Caco-2 (cell line): ENCODE measurements at regions of chr22 and their contacts with region 1.

Region 1: GRCh38 chr22:19879695-19880506 is 25.2 kb upstream of the GNB1L start:
- DNase-seq: peak in 1 of 2 experiments; percentile 31
- H3K4me3 ChIP-seq: no peak overlapping the region
- H3K4me3 Mint-ChIP-seq: peak overlapping the region; percentile 72
- H3K27ac Mint-ChIP-seq: peak overlapping the region; percentile 100
- H3K4me1 ChIP-seq: peaks cover 38% of the 10 kb centered on the region
- H3K4me1 Mint-ChIP-seq: peaks cover 13% of the 10 kb centered on the region
- H3K27me3 ChIP-seq: no peaks in the 10 kb centered on the region
- H3K27me3 Mint-ChIP-seq: no peaks in the 10 kb centered on the region
- CTCF ChIP-seq: no peak

Region 2: DNA sequence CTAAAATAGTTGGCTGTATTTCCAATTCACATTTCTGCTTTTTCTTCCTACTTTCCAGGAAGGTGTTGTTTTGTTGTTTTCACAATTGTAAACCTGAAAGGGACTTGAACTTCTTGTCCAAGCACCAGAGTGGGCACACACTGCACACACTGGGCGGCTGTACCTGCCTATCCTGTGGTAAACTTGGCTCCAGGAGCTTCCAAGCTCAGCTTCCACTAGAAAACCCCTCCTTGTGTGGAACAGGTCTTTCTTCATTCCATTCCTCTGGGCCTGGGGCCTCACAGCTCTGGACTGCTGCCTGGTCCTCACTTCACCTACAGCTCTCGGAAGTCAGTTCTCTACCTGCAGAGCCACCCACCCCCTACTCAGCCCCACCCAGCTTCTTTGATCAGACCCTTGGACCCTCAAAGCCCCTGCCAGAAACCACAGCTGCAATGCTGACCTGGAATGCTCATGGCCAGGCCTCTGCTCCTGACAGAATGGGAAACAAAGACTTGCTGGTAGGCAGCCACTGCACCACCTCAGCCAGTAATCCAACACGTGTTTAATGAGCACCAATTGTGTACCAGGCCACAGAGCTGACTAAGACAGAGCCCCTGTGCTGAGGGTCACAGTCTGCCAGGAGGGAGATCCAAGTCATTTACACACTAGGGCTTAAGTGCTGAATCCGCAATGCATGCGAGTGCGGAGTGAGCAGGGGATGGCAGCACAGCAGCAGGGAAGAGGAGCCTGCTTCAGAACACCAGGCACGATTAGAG is 30.0 kb before region 1 on chr22:
- CTCF ChIA-PET with region 1: interaction called, 3 read pairs
- POLR2A ChIA-PET with region 1: interaction called, 5 read pairs
- intact Hi-C with region 1: loop called (anchors 1 kb)
- DNase-seq: peak; percentile 85 to 88
- H3K4me3 ChIP-seq: no peak overlapping the region
- H3K4me3 Mint-ChIP-seq: peak overlapping the region; percentile 69
- H3K27ac Mint-ChIP-seq: peak overlapping the region; percentile 98
- H3K4me1 ChIP-seq: peaks cover 49% of the 10 kb centered on the region
- H3K4me1 Mint-ChIP-seq: peaks cover 38% of the 10 kb centered on the region
- H3K27me3 ChIP-seq: no peaks in the 10 kb centered on the region
- H3K27me3 Mint-ChIP-seq: no peaks in the 10 kb centered on the region
- CTCF ChIP-seq: no peak

Region 3: DNA sequence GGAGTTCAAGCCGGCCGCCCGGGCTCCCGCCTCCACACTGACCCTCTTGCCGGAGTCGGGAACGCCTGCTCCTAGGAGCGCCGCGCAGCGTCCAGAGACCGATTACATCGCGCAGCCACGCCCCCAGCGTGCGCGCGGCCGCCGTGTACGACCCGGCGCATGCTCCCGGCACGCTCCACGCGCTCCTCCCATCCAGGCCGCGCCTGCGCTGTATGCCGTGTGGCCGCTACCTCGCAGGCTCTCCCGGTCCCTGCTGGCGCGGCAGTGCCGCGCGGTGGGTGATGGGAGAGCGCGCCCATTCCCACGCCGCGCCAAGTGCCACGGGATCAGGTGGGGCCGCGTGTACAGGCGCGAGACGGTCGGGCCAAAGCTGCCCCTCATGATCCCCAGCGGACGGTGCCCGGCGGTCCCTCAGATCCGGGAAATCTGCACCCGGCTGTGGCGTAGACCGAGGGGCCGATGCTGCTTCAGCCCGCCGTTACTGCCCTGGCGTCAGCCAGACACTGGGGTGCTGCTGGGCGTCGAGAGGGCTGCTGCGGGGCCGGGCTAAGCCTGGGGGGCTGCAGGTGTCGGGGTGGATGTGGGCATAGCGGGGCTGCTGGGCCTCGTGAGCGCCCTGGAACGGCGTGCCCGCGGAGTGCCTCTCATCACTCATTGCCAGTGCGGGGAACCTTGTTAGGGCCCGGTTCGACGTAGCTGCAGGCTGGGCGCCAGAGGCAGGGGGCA is 25.0 kb before region 1 on chr22 and contains the starts of genes GNB1L and RTL10:
- CTCF ChIA-PET with region 1: interaction called, 3 read pairs
- POLR2A ChIA-PET with region 1: interaction called, 5 read pairs
- intact Hi-C with region 1: loop called (anchors 1 kb)
- DNase-seq: peak; percentile 95 to 96
- H3K4me3 ChIP-seq: peak within 1 kb of the TSS; percentile 87
- H3K4me3 Mint-ChIP-seq: peak within 1 kb of the TSS; percentile 95
- H3K27ac Mint-ChIP-seq: peak within 1 kb of the TSS; percentile 87
- H3K4me1 ChIP-seq: peaks cover 38% of the 10 kb centered on the region
- H3K4me1 Mint-ChIP-seq: peaks cover 29% of the 10 kb centered on the region
- H3K27me3 ChIP-seq: no peaks in the 10 kb centered on the region
- H3K27me3 Mint-ChIP-seq: no peaks in the 10 kb centered on the region
- CTCF ChIP-seq: no peak
- total RNA-seq, gene GNB1L: 13.4 and 15.8 TPM in 2 replicates
- total RNA-seq, gene RTL10: 27.5 and 29.7 TPM in 2 replicates

Region 4: DNA sequence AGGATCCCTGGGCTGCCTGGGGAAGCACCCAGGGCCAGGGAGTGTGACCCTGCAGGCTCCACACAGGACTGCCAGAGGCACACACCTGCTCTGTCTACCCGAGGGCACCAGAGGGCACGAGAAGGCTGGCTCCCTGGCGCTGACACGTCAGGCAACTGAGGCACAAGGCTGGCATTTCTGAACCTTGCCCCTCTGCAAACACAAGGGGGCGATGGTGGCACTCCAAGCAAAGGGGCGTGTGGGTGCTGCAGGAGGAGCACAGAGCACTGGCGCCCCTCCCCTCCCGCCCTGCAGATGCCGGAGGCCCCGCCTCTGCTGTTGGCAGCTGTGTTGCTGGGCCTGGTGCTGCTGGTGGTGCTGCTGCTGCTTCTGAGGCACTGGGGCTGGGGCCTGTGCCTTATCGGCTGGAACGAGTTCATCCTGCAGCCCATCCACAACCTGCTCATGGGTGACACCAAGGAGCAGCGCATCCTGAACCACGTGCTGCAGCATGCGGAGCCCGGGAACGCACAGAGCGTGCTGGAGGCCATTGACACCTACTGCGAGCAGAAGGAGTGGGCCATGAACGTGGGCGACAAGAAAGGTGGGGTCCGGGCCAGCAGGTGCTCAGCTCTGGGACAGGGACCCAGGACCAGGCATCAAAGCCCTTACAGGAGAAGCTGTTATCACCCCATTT is 82.5 kb after region 1 on chr22:
- CTCF ChIA-PET with region 1: no interaction called
- POLR2A ChIA-PET with region 1: no interaction called
- intact Hi-C with region 1: no loop called
- DNase-seq: peak; percentile 80 to 89
- H3K4me3 ChIP-seq: peak overlapping the region; percentile 50
- H3K4me3 Mint-ChIP-seq: peak overlapping the region; percentile 94
- H3K27ac Mint-ChIP-seq: peak overlapping the region; percentile 100
- H3K4me1 ChIP-seq: peaks cover 57% of the 10 kb centered on the region
- H3K4me1 Mint-ChIP-seq: peaks cover 20% of the 10 kb centered on the region
- H3K27me3 ChIP-seq: no peaks in the 10 kb centered on the region
- H3K27me3 Mint-ChIP-seq: no peaks in the 10 kb centered on the region
- CTCF ChIP-seq: peak; percentile 69 to 72